CD8-positive, alpha-beta T cell (primary cell): ENCODE measurements at regions of chr17 and their contacts with region 1.

Region 1: GRCh38 chr17:49434821-49435670 is 20.4 kb upstream of the PHB1 start:
- DNase-seq: peak in 7 of 9 experiments; percentile 9 to 68 (median 32)
- ATAC-seq: no peak
- H3K4me3 ChIP-seq: no peak overlapping the region
- H3K4me3 Mint-ChIP-seq: no peak overlapping the region
- H3K27ac ChIP-seq: no peak overlapping the region
- H3K27ac Mint-ChIP-seq: no peak overlapping the region
- H3K4me1 ChIP-seq: no peaks in the 10 kb centered on the region
- H3K4me1 Mint-ChIP-seq: peaks cover 2% of the 10 kb centered on the region
- H3K27me3 ChIP-seq: peaks cover 0 to 6% of the 10 kb centered on the region in 2 experiments
- H3K27me3 Mint-ChIP-seq: peaks cover 27% of the 10 kb centered on the region
- CTCF ChIP-seq: peak; percentile 74

Region 2: DNA sequence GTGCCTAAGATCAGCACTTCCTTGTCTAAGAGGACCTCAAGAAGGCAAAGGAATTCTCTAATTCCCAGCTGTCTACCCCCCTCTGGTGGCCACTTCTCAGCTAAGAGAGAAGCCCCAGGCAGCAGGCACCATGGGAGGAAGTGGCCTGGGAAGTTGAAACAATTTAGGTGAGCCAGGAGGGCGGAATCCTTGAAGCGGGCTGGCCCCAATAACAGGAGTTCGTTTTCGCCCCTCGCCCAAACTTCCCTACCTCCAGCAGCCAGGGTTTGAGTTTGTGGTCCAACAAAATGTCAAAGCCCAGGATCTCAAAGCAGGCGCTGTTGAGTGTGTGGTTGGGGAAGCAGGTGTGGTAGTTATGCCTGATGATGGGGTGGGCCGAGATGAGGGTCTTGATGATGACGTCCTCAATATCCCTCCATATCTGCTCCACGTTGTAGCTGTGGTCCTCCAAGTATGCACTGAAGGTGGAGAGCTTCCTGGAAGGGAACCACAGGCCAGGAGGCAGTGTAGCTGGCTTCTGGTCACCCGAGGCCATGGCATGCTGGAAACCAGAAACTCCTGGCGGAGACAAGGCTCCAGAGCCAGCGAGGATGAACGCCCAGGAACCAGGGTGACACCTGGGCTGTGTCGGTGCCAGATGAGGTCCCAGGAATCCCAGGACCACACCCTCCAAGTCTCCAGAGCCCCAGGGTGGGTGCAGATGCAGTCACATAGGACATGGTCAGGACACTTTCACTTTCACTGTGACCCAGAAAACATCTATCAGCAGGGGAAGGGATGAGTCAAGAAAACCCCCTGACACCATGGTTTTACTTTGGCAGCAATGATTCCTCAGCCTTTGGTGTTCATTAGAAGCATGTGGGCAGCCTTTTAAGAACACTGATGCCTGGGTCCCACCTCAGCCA is 643.7 kb before region 1 on chr17:
- CTCF ChIA-PET with region 1: no interaction called
- POLR2A ChIA-PET with region 1: no interaction called
- intact Hi-C with region 1: loop called in 1 of 2 experiments (anchors 5 kb)
- DNase-seq: peak in 4 of 9 experiments; percentile 16 to 49 (median 24)
- ATAC-seq: no peak
- H3K4me3 ChIP-seq: no peak overlapping the region
- H3K4me3 Mint-ChIP-seq: no peak overlapping the region
- H3K27ac ChIP-seq: no peak overlapping the region
- H3K27ac Mint-ChIP-seq: no peak overlapping the region
- H3K4me1 ChIP-seq: peaks cover 8% of the 10 kb centered on the region
- H3K4me1 Mint-ChIP-seq: peaks cover 3% of the 10 kb centered on the region
- H3K27me3 ChIP-seq: peaks cover 2 to 3% of the 10 kb centered on the region in 2 experiments
- H3K27me3 Mint-ChIP-seq: peaks cover 43% of the 10 kb centered on the region
- CTCF ChIP-seq: no peak

Region 3: DNA sequence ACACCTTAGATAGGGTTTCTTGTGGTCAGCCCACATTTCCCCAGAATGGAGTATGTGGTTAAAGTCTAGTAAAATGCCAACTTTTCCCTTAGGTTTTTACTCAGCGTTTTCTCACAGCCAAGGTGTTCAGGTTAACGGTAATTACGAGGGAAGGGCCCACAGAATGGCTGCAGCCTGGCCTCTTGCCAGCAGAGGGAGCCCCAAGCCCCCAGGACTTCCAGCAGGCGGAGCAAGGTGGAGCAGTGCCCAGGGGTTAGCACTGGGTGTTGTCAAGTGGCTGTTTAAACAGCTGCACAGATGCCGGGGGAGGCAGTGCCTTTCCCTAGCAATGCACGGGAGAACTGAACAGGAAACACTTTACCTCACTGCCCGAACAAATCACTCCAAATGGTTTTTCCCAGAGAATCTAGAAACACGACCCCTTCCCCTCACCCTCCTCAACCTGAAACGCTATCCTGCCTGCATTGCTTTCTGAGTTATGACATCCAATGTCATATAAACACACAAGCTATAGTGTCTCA is 27.0 kb before region 1 on chr17:
- CTCF ChIA-PET with region 1: interaction called, 12 read pairs
- POLR2A ChIA-PET with region 1: no interaction called
- intact Hi-C with region 1: loop called in 1 of 2 experiments (anchors 1 kb)
- DNase-seq: peak; percentile 76 to 90 (median 85)
- ATAC-seq: peak; percentile 97
- H3K4me3 ChIP-seq: no peak overlapping the region
- H3K4me3 Mint-ChIP-seq: no peak overlapping the region
- H3K27ac ChIP-seq: peak overlapping the region in 1 of 2 experiments; percentile 1
- H3K27ac Mint-ChIP-seq: peak overlapping the region; percentile 17
- H3K4me1 ChIP-seq: peaks cover 27% of the 10 kb centered on the region
- H3K4me1 Mint-ChIP-seq: peaks cover 36% of the 10 kb centered on the region
- H3K27me3 ChIP-seq: no peaks in the 10 kb centered on the region
- H3K27me3 Mint-ChIP-seq: no peaks in the 10 kb centered on the region
- CTCF ChIP-seq: peak; percentile 94

Region 4: DNA sequence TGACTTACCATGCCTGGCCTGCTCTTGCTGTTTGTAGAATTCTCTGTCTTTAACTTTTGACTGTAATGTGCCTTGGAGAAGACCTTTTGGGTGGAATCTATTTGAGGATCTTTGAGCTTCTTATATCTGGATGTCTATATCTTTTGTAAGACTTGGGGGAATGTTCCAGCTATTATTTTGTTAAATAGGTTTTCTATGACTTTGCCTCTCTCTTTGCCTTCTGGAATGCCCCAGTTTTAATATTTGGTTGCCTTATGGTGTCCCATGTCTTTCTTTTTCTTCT is 10.1 kb before region 1 on chr17:
- CTCF ChIA-PET with region 1: interaction called, 18 read pairs
- POLR2A ChIA-PET with region 1: interaction called, 3 read pairs
- intact Hi-C with region 1: no loop called
- DNase-seq: no peak
- ATAC-seq: no peak
- H3K4me3 ChIP-seq: no peak overlapping the region
- H3K4me3 Mint-ChIP-seq: no peak overlapping the region
- H3K27ac ChIP-seq: no peak overlapping the region
- H3K27ac Mint-ChIP-seq: no peak overlapping the region
- H3K4me1 ChIP-seq: no peaks in the 10 kb centered on the region
- H3K4me1 Mint-ChIP-seq: no peaks in the 10 kb centered on the region
- H3K27me3 ChIP-seq: no peaks in the 10 kb centered on the region
- H3K27me3 Mint-ChIP-seq: peaks cover 16% of the 10 kb centered on the region
- CTCF ChIP-seq: no peak